Endothelial cell of umbilical vein (primary cell): ENCODE measurements at regions of chr5 and their contacts with region 1.

Region 1: GRCh38 chr5:175873088-175873454 is 1.7 kb downstream of the CPLX2 start:
- DNase-seq: no peak
- H3K4me3 ChIP-seq: no peak overlapping the region
- H3K27ac ChIP-seq: no peak overlapping the region
- H3K4me1 ChIP-seq: no peaks in the 10 kb centered on the region
- H3K27me3 ChIP-seq: peaks cover 0 to 5% of the 10 kb centered on the region in 2 experiments
- CTCF ChIP-seq: peak in 1 of 2 donors; percentile 10
- POLR2A ChIP-seq: no peak

Region 2: DNA sequence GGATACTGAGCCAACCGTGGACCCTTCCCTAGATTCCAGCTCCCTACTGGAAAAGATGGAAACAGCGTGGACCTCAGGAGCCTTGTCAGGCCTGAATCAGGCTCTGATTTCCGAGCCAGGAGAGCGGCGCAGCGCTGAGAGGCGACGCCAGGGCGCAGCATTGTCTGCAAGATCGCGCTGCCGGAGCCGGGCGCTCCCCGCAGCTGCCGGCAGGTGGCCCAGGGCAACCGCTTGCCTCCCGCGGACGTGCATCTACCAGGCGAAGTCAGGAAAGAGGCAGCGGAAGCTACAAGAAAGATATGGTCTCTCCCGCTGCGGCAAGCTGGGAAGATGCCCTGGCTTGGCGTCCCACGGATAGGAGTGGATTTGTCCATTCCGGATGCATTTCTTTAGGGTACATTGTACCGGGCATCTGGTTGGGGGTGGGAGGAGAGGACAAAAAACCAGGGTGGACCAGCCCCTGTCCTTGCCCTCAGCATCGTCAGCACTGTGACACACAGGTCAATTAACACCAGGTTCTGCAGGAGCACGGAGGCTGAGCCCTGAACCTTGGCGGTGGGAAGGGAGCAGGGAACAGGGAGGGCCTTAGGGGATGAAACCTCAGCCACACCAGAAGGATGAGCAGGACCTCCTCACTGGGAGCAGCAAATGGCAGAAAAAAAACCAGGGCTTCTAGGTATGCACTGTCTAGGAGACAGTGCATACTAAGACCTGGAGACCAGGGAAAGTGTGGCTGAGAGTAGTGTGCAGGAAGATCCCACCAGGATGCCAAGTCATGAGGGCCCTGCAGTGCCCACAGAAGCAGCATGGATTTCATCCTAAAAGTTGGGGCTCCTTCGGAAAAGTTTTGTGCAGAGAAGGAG is 338.8 kb before region 1 on chr5:
- CTCF ChIA-PET with region 1: interaction called, 3 read pairs
- POLR2A ChIA-PET with region 1: no interaction called
- dilution Hi-C with region 1: no loop called
- intact Hi-C with region 1: loop called (anchors 10 kb)
- DNase-seq: peak; percentile 69
- H3K4me3 ChIP-seq: no peak overlapping the region
- H3K27ac ChIP-seq: no peak overlapping the region
- H3K4me1 ChIP-seq: no peaks in the 10 kb centered on the region
- H3K27me3 ChIP-seq: no peaks in the 10 kb centered on the region
- CTCF ChIP-seq: peak; percentile 98
- POLR2A ChIP-seq: no peak

Region 3: DNA sequence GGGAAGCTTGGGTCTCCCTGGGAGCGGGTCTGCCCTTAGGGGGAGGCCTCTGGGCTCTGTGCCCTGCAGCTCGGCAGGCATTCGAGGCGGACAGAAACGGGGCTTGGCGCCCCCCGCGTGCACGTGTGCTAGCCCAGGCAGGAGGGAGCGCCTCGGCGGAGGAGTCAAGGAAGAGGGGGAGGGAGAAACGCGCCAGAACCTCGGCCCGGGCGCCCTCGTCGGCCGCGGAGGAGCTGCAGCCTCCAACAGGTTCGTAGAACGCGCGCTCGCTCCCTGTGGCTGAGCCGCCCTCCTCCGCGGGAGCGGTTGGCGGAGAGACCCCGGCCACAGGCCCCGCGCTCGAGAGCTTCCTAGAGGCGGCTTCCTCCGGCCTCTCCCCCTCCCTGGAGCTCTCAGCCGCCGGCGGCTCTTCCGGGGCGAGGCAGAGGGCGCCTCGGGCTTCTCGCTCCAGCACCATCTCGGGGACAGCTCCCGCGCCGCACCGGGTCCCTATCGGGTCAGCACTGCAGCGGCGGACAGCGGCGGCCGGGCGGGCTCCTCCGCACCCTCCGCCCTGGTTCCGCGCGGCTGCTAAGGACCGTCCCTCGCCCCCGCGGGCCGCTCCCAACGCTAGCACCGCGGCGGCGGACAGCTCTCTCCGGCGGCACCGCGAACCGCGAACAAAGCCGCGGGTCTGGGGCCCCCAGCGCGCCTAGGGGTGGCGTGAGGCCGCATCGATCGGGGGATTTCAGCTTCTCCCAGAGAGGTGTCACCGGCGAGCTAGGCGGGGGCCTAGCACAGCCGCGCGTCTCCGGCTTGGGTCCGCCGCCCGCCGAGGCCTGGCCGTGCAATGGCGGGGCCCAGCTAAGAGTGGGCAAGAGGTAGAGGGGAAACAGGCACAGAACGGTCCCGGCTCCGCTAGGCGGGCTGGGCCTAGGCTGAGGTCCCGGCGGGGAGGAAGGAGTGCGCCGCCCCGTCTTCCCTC is 76.3 kb before region 1 on chr5:
- CTCF ChIA-PET with region 1: interaction called, 9 read pairs
- POLR2A ChIA-PET with region 1: no interaction called
- dilution Hi-C with region 1: no loop called
- intact Hi-C with region 1: loop called (anchors 1 kb)
- DNase-seq: peak; percentile 66
- H3K4me3 ChIP-seq: no peak overlapping the region
- H3K27ac ChIP-seq: no peak overlapping the region
- H3K4me1 ChIP-seq: no peaks in the 10 kb centered on the region
- H3K27me3 ChIP-seq: peaks cover 0 to 2% of the 10 kb centered on the region in 2 experiments
- CTCF ChIP-seq: no peak
- POLR2A ChIP-seq: no peak

Region 4: GRCh38 chr5:175840050-175840841 is 32.8 kb before region 1 on chr5:
- CTCF ChIA-PET with region 1: no interaction called
- POLR2A ChIA-PET with region 1: no interaction called
- dilution Hi-C with region 1: no loop called
- intact Hi-C with region 1: no loop called
- DNase-seq: no peak
- H3K4me3 ChIP-seq: no peak overlapping the region
- H3K27ac ChIP-seq: no peak overlapping the region
- H3K4me1 ChIP-seq: no peaks in the 10 kb centered on the region
- H3K27me3 ChIP-seq: no peaks in the 10 kb centered on the region
- CTCF ChIP-seq: peak; percentile 14 to 28
- POLR2A ChIP-seq: no peak

Region 5: DNA sequence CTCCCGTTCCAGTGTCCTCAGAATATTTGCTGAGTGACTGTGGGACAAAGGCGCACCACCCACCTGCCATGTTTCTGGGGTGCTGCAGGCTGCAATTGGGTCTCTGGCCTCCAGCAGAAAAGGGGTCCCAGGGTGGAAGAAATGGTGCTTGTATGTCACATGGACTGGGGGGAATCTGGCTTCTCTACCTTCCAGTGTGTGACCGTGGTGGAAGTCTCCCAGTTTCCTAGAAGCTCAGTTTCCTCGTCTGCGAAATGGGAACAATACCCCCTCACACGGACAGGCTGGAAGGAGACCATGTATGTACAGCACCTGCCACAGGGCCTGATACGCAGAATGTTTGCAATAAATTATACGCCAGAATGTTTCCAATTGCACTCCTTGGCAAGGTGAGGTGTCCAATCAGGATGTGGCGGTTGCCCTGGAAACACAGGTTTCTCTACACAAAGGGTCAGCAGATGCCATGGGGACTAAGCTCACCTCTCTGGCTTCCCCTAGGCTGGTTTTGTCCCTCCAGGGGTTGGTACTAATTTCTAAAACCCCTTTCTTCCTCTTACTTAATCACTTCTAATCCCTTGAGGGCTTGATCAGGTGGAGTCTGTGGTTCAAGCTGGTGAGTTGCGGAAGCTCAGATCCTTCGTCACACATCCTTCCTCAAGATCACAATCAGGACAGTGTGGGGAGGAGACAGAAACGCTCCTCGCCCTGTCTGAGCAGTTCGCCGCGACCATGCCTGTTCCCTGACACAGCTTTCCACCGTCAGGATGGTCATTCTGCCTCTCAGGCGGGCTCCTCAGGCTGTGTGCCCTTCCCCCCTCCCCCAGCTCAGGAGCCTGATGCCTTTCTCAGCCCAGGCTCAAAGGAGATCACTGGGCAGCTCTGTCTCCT is 22.4 kb after region 1 on chr5:
- CTCF ChIA-PET with region 1: no interaction called
- POLR2A ChIA-PET with region 1: interaction called, 10 read pairs
- dilution Hi-C with region 1: no loop called
- intact Hi-C with region 1: no loop called
- DNase-seq: no peak
- H3K4me3 ChIP-seq: no peak overlapping the region
- H3K27ac ChIP-seq: no peak overlapping the region
- H3K4me1 ChIP-seq: no peaks in the 10 kb centered on the region
- H3K27me3 ChIP-seq: no peaks in the 10 kb centered on the region
- CTCF ChIP-seq: no peak
- POLR2A ChIP-seq: no peak